ENCODE measurements at regions of chr11 and their contacts with region 1.

Region 1: DNA sequence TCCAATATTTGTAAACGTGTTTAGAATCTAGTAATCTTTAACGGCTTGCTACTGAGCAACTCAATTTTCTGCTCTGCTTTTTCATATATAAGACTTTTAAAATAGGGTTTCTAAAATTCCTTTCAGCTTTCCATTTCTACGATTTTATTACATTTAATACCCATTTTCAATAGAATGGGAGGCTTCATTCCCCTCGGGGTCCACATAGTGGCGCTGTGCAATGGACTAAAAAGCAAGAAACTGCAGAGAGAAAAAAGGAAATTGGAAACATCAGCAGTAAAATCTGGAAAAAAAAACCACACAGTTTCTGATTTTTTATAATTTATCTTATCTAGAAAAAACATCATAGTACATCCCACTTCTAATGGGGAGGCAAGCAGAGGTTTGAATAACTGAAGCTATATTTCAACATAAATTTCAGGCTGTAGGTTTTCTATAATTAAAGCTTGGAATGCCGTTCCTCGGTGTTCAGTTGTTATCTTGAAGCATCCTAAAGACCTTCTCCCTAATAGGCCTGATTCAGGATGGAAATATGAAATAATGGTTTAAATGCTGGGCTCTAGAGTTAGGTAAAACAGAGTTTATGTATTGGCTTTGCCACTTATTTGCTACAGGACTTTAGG is 18.7 kb upstream of the JHY start:
- DNase-seq: no peak
- ATAC-seq: peak; percentile 68
- H3K4me3 ChIP-seq: no peak overlapping the region
- H3K27ac ChIP-seq: no peak overlapping the region
- H3K4me1 ChIP-seq: peaks cover 3% of the 10 kb centered on the region
- H3K27me3 ChIP-seq: peaks cover 0 to 3% of the 10 kb centered on the region in 2 experiments; a peak in 1 of 4 replicates
- CTCF ChIP-seq: peak; percentile 82 to 83 (median 82)
- EP300 ChIP-seq: no peak
- POLR2A ChIP-seq: no peak
- RAD21 ChIP-seq: peak; percentile 92

Region 2: DNA sequence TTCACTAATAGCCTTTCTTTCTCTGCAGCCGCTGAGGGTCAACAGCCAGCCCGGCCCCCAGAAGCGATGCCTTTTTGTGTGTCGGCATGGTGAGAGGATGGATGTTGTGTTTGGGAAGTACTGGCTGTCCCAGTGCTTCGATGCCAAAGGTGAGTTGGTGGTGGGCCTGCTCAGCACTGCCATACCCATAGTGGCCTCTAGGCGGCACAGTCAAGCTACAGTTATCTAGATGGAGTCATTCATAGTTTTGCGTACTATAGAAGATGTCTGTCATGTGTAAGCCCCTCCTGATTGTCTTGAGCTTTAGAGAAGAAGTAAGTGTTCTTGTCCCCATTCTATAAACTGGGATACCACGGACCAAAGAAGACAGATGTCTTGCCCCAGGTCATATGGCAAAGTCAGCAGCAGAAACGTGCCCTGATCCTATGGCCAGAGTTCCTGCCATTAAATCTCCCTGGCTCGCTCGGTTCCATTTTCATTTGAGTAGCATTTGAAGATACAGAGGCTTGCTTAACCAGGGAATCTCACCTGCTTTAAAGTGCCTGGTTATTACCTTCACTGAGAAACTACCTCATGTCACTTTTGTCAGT is 67.6 kb before region 1 on chr11:
- CTCF ChIA-PET with region 1: interaction called, 490 read pairs
- POLR2A ChIA-PET with region 1: no interaction called
- RAD21 ChIA-PET with region 1: interaction called, 8 read pairs
- SMC1A ChIA-PET with region 1: interaction called, 294 read pairs
- in situ Hi-C with region 1: no loop called
- intact Hi-C with region 1: no loop called
- DNase-seq: no peak
- ATAC-seq: peak; percentile 98
- H3K4me3 ChIP-seq: no peak overlapping the region
- H3K27ac ChIP-seq: no peak overlapping the region
- H3K4me1 ChIP-seq: no peaks in the 10 kb centered on the region
- H3K27me3 ChIP-seq: no peaks in the 10 kb centered on the region
- CTCF ChIP-seq: peak; percentile 92 to 96 (median 93)
- EP300 ChIP-seq: no peak
- POLR2A ChIP-seq: no peak
- RAD21 ChIP-seq: peak; percentile 92

Region 3: GRCh38 chr11:122814401-122814800 is 49.4 kb before region 1 on chr11:
- CTCF ChIA-PET with region 1: interaction called, 190 read pairs
- POLR2A ChIA-PET with region 1: no interaction called
- RAD21 ChIA-PET with region 1: interaction called, 175 read pairs
- SMC1A ChIA-PET with region 1: interaction called, 15 read pairs
- in situ Hi-C with region 1: no loop called
- intact Hi-C with region 1: no loop called
- DNase-seq: no peak
- ATAC-seq: peak; percentile 93
- H3K4me3 ChIP-seq: no peak overlapping the region
- H3K27ac ChIP-seq: no peak overlapping the region
- H3K4me1 ChIP-seq: no peaks in the 10 kb centered on the region; the same call in 1 of the 2 replicates
- H3K27me3 ChIP-seq: no peaks in the 10 kb centered on the region
- CTCF ChIP-seq: peak; percentile 22 to 51 (median 28); a peak in 3 of 6 replicates
- EP300 ChIP-seq: no peak
- POLR2A ChIP-seq: no peak
- RAD21 ChIP-seq: peak; percentile 60

Region 4: GRCh38 chr11:122882857-122883645 is 19.2 kb after region 1 on chr11:
- CTCF ChIA-PET with region 1: interaction called, 101 read pairs
- POLR2A ChIA-PET with region 1: interaction called, 9 read pairs
- RAD21 ChIA-PET with region 1: interaction called, 36 read pairs
- SMC1A ChIA-PET with region 1: interaction called, 466 read pairs
- in situ Hi-C with region 1: no loop called
- intact Hi-C with region 1: no loop called
- DNase-seq: no peak
- ATAC-seq: peak; percentile 67
- H3K4me3 ChIP-seq: peak overlapping the region; percentile 76
- H3K27ac ChIP-seq: peak overlapping the region; percentile 71
- H3K4me1 ChIP-seq: no peaks in the 10 kb centered on the region; the same call in 1 of the 2 replicates
- H3K27me3 ChIP-seq: no peaks in the 10 kb centered on the region
- CTCF ChIP-seq: no peak
- EP300 ChIP-seq: 0 out of 4 replicates have a peak, but pooled peaks of 1 of the 2 experiments have one; percentile 17
- POLR2A ChIP-seq: peak; percentile 53; the same call in 1 of the 2 replicates
- RAD21 ChIP-seq: no peak

Region 5: GRCh38 chr11:122900587-122901202 is 36.9 kb after region 1 on chr11:
- CTCF ChIA-PET with region 1: interaction called, 13 read pairs
- POLR2A ChIA-PET with region 1: interaction called, 3 read pairs
- RAD21 ChIA-PET with region 1: interaction called, 8 read pairs
- SMC1A ChIA-PET with region 1: interaction called, 9 read pairs
- in situ Hi-C with region 1: no loop called
- intact Hi-C with region 1: no loop called
- DNase-seq: no peak
- ATAC-seq: peak; percentile 87
- H3K4me3 ChIP-seq: no peak overlapping the region
- H3K27ac ChIP-seq: no peak overlapping the region
- H3K4me1 ChIP-seq: no peaks in the 10 kb centered on the region
- H3K27me3 ChIP-seq: no peaks in the 10 kb centered on the region
- CTCF ChIP-seq: no peak
- EP300 ChIP-seq: no peak
- POLR2A ChIP-seq: no peak
- RAD21 ChIP-seq: peak; percentile 39; the same call in 1 of the 2 replicates

Region 6: GRCh38 chr11:123046473-123047259 is 182.9 kb after region 1 on chr11:
- CTCF ChIA-PET with region 1: interaction called, 387 read pairs
- POLR2A ChIA-PET with region 1: no interaction called
- RAD21 ChIA-PET with region 1: interaction called, 3 read pairs
- SMC1A ChIA-PET with region 1: interaction called, 159 read pairs
- in situ Hi-C with region 1: no loop called
- intact Hi-C with region 1: no loop called
- DNase-seq: no peak
- ATAC-seq: 0 out of 3 replicates have a peak, but pooled peaks have one; percentile 16
- H3K4me3 ChIP-seq: no peak overlapping the region
- H3K27ac ChIP-seq: no peak overlapping the region
- H3K4me1 ChIP-seq: no peaks in the 10 kb centered on the region
- H3K27me3 ChIP-seq: no peaks in the 10 kb centered on the region
- CTCF ChIP-seq: no peak
- EP300 ChIP-seq: no peak
- POLR2A ChIP-seq: no peak
- RAD21 ChIP-seq: no peak

Region 7: GRCh38 chr11:123264431-123264780 is 400.6 kb after region 1 on chr11:
- CTCF ChIA-PET with region 1: no interaction called
- POLR2A ChIA-PET with region 1: no interaction called
- RAD21 ChIA-PET with region 1: no interaction called
- SMC1A ChIA-PET with region 1: no interaction called
- in situ Hi-C with region 1: no loop called
- intact Hi-C with region 1: no loop called
- DNase-seq: no peak
- ATAC-seq: peak; percentile 28
- H3K4me3 ChIP-seq: 0 out of 2 replicates have a peak overlapping the region, but pooled peaks have one; percentile 39
- H3K27ac ChIP-seq: peak overlapping the region; percentile 53; the same call in 1 of the 2 replicates
- H3K4me1 ChIP-seq: peaks cover 20% of the 10 kb centered on the region
- H3K27me3 ChIP-seq: no peaks in the 10 kb centered on the region
- CTCF ChIP-seq: no peak
- EP300 ChIP-seq: no peak
- POLR2A ChIP-seq: no peak
- RAD21 ChIP-seq: no peak